Naive thymus-derived CD4-positive, alpha-beta T cell (primary cell): ENCODE measurements at regions of chr9 and their contacts with region 1.

Region 1: DNA sequence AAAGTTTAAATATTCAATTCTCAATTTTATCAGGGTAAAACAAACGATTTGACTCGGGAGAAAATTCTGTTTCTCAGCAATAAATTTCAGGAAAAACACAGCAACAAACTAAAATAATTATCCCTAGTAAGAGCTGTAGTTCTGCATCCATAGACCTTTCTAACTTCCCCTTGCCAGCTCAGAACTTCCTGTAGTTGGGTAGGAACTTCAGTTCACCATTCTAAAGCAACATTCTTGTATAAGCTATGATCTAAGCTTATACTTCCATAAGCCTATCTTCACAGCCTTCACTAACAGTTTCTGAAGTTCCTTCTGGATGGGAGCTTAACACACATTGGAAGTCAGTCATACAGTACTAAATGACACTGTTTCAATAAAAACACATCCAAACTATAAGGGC is 96.6 kb downstream of the UBAP2 start:
- DNase-seq: no peak
- ATAC-seq: no peak
- H3K4me3 ChIP-seq: no peak overlapping the region
- H3K4me3 Mint-ChIP-seq: no peak overlapping the region
- H3K27ac ChIP-seq: no peak overlapping the region
- H3K27ac Mint-ChIP-seq: no peak overlapping the region
- H3K4me1 ChIP-seq: no peaks in the 10 kb centered on the region
- H3K4me1 Mint-ChIP-seq: peaks cover 0 to 10% (median 0%) of the 10 kb centered on the region in 7 donors
- H3K27me3 ChIP-seq: no peaks in the 10 kb centered on the region
- H3K27me3 Mint-ChIP-seq: no peaks in the 10 kb centered on the region

Region 2: DNA sequence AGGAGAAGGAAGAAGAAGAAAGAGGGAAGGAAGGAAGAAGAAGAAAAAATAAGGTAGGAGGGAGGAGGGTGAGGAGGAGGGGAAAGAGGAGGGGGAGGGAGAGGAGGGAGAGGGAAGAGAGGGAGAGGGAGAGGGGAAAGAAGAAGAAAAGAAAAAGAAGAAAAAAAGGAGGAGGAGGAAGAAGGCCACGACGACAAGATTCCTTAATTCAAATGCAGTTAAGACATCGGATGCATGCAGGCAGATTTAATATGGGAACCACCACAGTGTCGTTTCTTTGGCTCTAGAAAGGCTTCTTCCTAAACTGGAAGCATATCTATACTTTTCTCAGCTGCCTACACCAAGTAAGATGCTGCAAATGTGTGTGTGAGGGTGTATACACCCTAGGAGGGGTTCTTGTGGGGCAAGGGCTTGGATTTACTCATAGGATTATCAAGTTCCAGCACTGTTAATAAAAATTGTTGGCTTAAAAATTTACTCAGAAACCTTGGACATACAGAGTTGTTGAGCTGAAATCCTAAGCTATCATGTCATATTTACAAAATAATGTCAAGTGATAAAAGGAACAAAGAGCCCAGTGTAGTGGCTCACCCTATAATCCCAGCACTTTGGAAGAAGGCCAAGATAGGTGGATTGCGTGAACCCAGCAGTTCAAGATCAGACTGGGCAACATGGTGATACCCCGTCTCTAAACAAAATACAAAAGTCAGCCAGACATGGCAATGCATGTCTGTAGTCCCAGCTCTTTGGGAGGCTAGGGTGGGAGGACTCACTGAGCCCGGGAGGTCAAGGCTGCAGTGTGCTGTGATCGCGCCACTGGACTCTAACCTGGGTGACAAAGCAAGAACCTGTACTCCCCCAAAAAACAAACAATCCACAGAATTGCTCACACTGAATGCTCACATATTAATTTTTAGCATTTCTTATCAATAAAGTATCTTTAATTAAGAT is 11.9 kb before region 1 on chr9:
- CTCF ChIA-PET with region 1: no interaction called
- POLR2A ChIA-PET with region 1: no interaction called
- intact Hi-C with region 1: loop called in 1 of 2 experiments (anchors 1 kb)
- DNase-seq: no peak
- ATAC-seq: no peak
- H3K4me3 ChIP-seq: no peak overlapping the region
- H3K4me3 Mint-ChIP-seq: no peak overlapping the region
- H3K27ac ChIP-seq: no peak overlapping the region
- H3K27ac Mint-ChIP-seq: no peak overlapping the region
- H3K4me1 ChIP-seq: no peaks in the 10 kb centered on the region
- H3K4me1 Mint-ChIP-seq: peaks cover 0 to 5% (median 0%) of the 10 kb centered on the region in 7 donors
- H3K27me3 ChIP-seq: no peaks in the 10 kb centered on the region
- H3K27me3 Mint-ChIP-seq: no peaks in the 10 kb centered on the region

Region 3: DNA sequence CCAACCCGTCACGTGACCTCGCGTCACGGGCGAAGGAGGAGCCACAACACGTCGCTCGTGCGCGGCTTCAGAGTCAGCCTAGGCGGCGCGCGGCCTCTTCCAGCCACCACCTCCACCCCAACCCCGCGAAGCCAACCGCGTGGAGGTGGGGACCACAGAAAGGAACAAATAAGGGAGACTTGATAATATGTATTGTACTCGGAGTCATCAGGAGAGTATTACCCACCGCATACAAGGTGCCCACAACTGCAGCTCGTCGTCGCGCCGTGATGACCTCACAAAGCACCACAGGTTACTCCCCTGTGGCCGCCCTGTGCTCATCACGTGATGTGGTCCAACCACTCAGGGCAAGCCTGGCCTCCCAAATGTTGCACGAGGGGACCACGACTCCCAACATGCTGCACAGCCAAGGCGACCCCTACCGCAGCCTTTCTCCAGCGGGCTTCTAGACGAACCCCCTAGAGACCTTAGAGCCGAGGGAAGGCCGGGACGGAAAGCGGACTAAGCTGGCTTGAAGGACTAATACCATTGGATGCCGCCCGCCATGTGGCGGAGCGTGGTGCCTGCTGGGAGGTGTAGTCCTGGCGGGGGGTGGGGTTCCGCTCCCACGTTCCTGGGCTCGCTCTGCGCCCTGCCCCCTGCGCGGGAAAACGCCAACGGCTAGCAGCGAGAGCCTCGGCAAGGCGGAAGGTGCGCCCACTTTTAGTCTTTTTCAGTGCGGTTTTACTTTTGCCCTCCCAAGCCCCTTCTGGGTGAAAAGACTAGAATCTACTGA is 97.0 kb after region 1 on chr9:
- CTCF ChIA-PET with region 1: no interaction called
- POLR2A ChIA-PET with region 1: no interaction called
- intact Hi-C with region 1: no loop called
- DNase-seq: peak; percentile 96 to 99 (median 97)
- ATAC-seq: peak; percentile 93
- H3K4me3 ChIP-seq: peak overlapping the region; percentile 98
- H3K4me3 Mint-ChIP-seq: peak overlapping the region; percentile 96 to 100 (median 98)
- H3K27ac ChIP-seq: peak overlapping the region; percentile 86
- H3K27ac Mint-ChIP-seq: peak overlapping the region; percentile 98 to 100 (median 99)
- H3K4me1 ChIP-seq: peaks cover 11 to 22% of the 10 kb centered on the region in 2 donors
- H3K4me1 Mint-ChIP-seq: peaks cover 25 to 55% (median 31%) of the 10 kb centered on the region in 7 donors
- H3K27me3 ChIP-seq: no peaks in the 10 kb centered on the region
- H3K27me3 Mint-ChIP-seq: peaks cover 0 to 4% (median 0%) of the 10 kb centered on the region in 5 donors

Region 4: GRCh38 chr9:34114436-34114835 is 162.4 kb after region 1 on chr9:
- CTCF ChIA-PET with region 1: no interaction called
- POLR2A ChIA-PET with region 1: no interaction called
- intact Hi-C with region 1: no loop called
- DNase-seq: no peak
- ATAC-seq: no peak
- H3K4me3 ChIP-seq: no peak overlapping the region
- H3K4me3 Mint-ChIP-seq: no peak overlapping the region
- H3K27ac ChIP-seq: no peak overlapping the region
- H3K27ac Mint-ChIP-seq: peak overlapping the region in 4 of 9 donors; percentile 8 to 45 (median 16)
- H3K4me1 ChIP-seq: no peaks in the 10 kb centered on the region
- H3K4me1 Mint-ChIP-seq: peaks cover 4 to 29% (median 17%) of the 10 kb centered on the region in 7 donors
- H3K27me3 ChIP-seq: no peaks in the 10 kb centered on the region
- H3K27me3 Mint-ChIP-seq: no peaks in the 10 kb centered on the region